AG04450 (cell line): ENCODE measurements at regions of chr1 and their contacts with region 1.

Region 1: GRCh38 chr1:86965012-86965826 is 50.8 kb downstream of the HS2ST1 start:
- DNase-seq: peak; percentile 15
- H3K4me3 ChIP-seq: no peak overlapping the region
- H3K27ac ChIP-seq: no peak overlapping the region
- H3K27me3 ChIP-seq: no peaks in the 10 kb centered on the region
- CTCF ChIP-seq: peak; percentile 76

Region 2: GRCh38 chr1:86648255-86648654 is 317.0 kb before region 1 on chr1:
- CTCF ChIA-PET with region 1: no interaction called
- POLR2A ChIA-PET with region 1: no interaction called
- DNase-seq: peak; percentile 15
- H3K4me3 ChIP-seq: no peak overlapping the region
- H3K27ac ChIP-seq: no peak overlapping the region
- H3K27me3 ChIP-seq: no peaks in the 10 kb centered on the region
- CTCF ChIP-seq: no peak

Region 3: GRCh38 chr1:86779308-86780191 is 185.7 kb before region 1 on chr1:
- CTCF ChIA-PET with region 1: interaction called, 16 read pairs
- POLR2A ChIA-PET with region 1: no interaction called
- DNase-seq: no peak
- H3K4me3 ChIP-seq: no peak overlapping the region
- H3K27ac ChIP-seq: no peak overlapping the region
- H3K27me3 ChIP-seq: no peaks in the 10 kb centered on the region
- CTCF ChIP-seq: no peak

Region 4: DNA sequence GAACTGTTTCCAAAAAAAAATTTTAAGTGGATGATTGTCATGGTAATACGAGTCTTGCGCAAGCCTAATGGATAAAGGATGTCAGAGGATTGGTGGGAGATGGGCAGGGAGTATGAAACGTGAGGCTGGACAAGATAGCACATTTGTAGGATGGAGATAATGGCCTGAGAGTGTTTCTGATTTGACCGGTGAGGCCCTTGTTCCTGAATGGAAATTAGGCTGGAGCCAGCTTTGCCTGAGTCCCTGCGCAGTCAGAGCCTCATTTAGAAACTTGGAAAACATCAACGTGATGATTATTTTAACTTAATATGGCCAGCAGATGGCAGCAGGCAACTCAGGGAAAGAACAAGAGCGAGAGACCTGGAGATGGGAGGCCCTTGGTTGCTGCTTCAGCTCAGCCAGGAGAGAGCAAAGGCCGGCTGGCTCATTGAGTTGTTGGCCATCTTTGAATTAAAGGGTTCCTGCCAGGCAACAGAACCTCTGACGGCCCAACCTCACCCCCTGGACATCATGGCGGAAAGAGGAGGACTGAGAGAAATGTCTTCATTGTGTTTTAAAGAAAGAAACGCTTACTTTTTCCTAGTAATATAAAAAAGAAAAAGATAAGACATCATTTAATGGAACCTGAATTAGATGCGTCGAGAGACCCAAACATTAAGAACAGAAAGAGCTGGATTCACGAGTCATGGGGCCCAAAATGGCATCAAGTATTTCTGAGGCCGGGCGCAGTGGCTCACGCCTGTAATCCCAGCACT is 131.6 kb before region 1 on chr1:
- CTCF ChIA-PET with region 1: interaction called, 41 read pairs
- POLR2A ChIA-PET with region 1: no interaction called
- DNase-seq: peak; percentile 74
- H3K4me3 ChIP-seq: no peak overlapping the region
- H3K27ac ChIP-seq: no peak overlapping the region
- H3K27me3 ChIP-seq: no peaks in the 10 kb centered on the region
- CTCF ChIP-seq: peak; percentile 60

Region 5: DNA sequence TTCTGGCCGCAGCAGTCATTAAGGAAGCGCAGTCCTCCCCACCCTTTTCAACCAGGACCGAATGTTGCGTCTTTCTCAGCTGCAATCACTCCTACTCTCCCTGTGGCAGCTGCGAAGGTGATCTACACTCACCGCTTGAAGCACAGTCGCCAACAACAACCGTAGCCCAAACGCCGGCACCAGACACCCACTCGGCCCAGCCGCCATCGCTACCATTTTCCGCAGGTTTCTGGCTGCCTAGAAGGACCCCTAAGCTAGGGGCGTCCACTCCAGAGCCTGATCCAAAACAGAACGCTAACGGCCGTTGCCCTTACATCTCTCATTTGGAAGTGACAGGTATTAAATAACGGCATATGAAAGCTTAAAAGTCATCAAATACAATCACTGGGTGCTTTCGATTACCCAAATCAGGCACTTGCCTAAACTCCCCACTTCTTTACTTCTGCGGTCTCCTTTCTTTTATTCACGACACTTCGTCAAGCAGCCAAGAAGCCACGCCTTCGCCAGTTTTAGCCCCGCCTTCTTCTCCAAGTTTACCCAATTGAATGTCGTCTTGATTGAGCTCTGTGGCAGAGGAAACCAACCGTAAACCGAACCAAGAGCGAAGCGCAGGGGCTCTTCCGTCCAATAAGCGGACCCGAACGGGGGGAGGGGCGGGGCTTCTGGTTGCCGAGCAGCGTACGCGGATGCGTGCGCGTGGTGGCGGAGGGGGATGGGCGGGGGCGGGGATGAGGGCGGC is 51.2 kb before region 1 on chr1 and contains the start of gene SELENOF:
- CTCF ChIA-PET with region 1: interaction called, 10 read pairs
- POLR2A ChIA-PET with region 1: no interaction called
- DNase-seq: peak; percentile 100
- H3K4me3 ChIP-seq: peak within 1 kb of the TSS; percentile 100
- H3K27ac ChIP-seq: peak within 1 kb of the TSS; percentile 86
- H3K27me3 ChIP-seq: no peaks in the 10 kb centered on the region
- CTCF ChIP-seq: no peak
- polyA plus RNA-seq, gene SELENOF: 248 and 358 TPM in 2 replicates

Region 6: GRCh38 chr1:86953167-86953566 is 12.1 kb before region 1 on chr1:
- CTCF ChIA-PET with region 1: interaction called, 13 read pairs
- POLR2A ChIA-PET with region 1: no interaction called
- DNase-seq: no peak
- H3K4me3 ChIP-seq: peak overlapping the region; percentile 14; the same call in 1 of the 2 replicates
- H3K27ac ChIP-seq: no peak overlapping the region
- H3K27me3 ChIP-seq: no peaks in the 10 kb centered on the region
- CTCF ChIP-seq: no peak